Activated B cell treated with CpG ODN at 0.5 μM for 24 hours (primary cell): ENCODE measurements at regions of chr1 and their contacts with region 1.

Region 1: GRCh38 chr1:45750298-45751038 is at the start of gene IPP:
- DNase-seq: peak; percentile 96
- ATAC-seq: peak; percentile 95
- H3K4me3 Mint-ChIP-seq: peak within 1 kb of the TSS; percentile 93
- H3K27ac Mint-ChIP-seq: peak within 1 kb of the TSS; percentile 99
- H3K4me1 Mint-ChIP-seq: peaks cover 17% of the 10 kb centered on the region
- H3K27me3 Mint-ChIP-seq: no peaks in the 10 kb centered on the region
- CTCF ChIP-seq: no peak
- total RNA-seq, gene IPP: 10.2 and 11.4 TPM in 2 replicates

Region 2: GRCh38 chr1:45718289-45718688 is 32.2 kb before region 1 on chr1:
- CTCF ChIA-PET with region 1: no interaction called
- POLR2A ChIA-PET with region 1: no interaction called
- intact Hi-C with region 1: no loop called
- DNase-seq: no peak
- ATAC-seq: no peak
- H3K4me3 Mint-ChIP-seq: no peak overlapping the region
- H3K27ac Mint-ChIP-seq: no peak overlapping the region
- H3K4me1 Mint-ChIP-seq: no peaks in the 10 kb centered on the region
- H3K27me3 Mint-ChIP-seq: no peaks in the 10 kb centered on the region
- CTCF ChIP-seq: no peak

Region 3: GRCh38 chr1:45730475-45731339 is 19.8 kb before region 1 on chr1:
- CTCF ChIA-PET with region 1: interaction called, 3 read pairs
- POLR2A ChIA-PET with region 1: interaction called, 11 read pairs
- intact Hi-C with region 1: no loop called
- DNase-seq: no peak
- ATAC-seq: no peak
- H3K4me3 Mint-ChIP-seq: no peak overlapping the region
- H3K27ac Mint-ChIP-seq: no peak overlapping the region
- H3K4me1 Mint-ChIP-seq: peaks cover 11% of the 10 kb centered on the region
- H3K27me3 Mint-ChIP-seq: no peaks in the 10 kb centered on the region
- CTCF ChIP-seq: no peak

Region 4: DNA sequence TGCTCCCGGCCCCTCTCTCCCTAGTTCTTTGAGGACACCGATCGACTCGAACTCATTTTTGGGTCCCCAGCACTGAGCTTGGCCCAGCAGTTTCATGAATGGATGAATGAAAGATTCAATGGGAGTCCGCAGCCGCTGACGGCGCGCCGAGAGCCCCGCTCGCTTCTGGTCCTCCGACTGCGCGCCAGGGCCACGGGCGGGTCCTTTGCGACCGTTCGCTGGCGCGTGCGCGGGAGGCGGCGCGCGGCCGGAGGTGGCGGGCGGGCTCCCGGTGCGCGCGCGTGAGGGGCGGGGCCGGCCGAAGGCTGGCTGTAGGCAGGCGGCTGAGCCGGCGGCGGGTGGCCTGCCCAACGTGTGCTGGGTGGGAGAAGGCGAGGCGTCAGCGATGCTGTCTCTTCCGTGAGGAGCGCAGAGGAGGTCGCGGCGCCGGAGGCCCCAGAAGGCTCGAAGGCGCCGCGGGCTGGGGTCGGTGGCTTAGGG is 52.9 kb after region 1 on chr1 and contains the start of gene MAST2:
- CTCF ChIA-PET with region 1: no interaction called
- POLR2A ChIA-PET with region 1: no interaction called
- intact Hi-C with region 1: loop called (anchors 2 kb)
- DNase-seq: peak; percentile 91
- ATAC-seq: peak; percentile 96
- H3K4me3 Mint-ChIP-seq: peak within 1 kb of the TSS; percentile 92
- H3K27ac Mint-ChIP-seq: peak within 1 kb of the TSS; percentile 69
- H3K4me1 Mint-ChIP-seq: peaks cover 18% of the 10 kb centered on the region
- H3K27me3 Mint-ChIP-seq: no peaks in the 10 kb centered on the region
- CTCF ChIP-seq: no peak
- total RNA-seq, gene MAST2: 16.2 and 20.9 TPM in 2 replicates